Esophagus muscularis mucosa (tissue), 4 donors: ENCODE measurements at regions of chr9 and their contacts with region 1.

Region 1: DNA sequence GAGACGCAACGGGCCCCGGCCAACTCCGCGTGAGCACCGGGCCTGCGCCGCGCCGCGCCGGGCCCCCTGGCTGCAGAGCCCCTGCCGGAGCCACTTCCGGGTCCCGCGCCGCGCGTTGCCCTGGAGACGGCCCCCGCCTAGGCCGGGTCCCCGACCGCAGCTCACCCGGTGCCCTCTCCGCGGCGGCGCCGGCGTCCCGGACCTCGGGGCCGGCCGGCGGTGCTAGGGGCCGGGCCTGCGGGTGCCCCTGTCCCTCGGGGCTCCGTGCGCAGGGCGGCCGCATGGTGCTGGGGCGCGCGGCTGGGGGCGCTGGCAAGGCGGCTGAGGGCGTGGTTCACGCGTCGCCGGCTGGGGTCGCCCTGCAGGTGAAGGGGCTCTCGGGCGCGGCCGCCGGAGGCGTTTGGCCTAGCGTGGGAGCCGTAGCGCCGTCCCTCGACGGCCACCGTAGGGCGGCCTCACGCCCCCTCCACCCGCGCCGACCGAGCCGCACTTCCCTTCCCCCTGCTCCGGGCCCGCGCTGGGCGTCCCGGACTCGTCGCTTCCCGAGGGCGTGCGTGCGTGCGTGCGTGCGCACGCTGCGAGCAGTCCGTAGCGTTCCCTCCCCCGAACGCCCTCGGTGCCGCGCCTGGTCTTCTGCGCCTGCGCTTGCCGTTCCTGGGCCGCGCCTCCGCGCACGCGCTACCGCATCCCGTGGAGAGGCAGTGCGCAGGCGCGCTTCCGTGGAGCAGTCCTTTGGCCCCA is at the start of gene TMEM250:
- DNase-seq: peak; percentile 97
- H3K4me3 ChIP-seq: peak within 1 kb of the TSS; percentile 76 to 91 (median 88)
- H3K27ac ChIP-seq: peak within 1 kb of the TSS; percentile 93 to 100 (median 96)
- H3K4me1 ChIP-seq: peaks cover 31 to 57% (median 47%) of the 10 kb centered on the region in 4 donors
- H3K27me3 ChIP-seq: peaks cover 0 to 4% (median 0%) of the 10 kb centered on the region in 4 donors
- CTCF ChIP-seq: peak in 2 of 3 experiments; percentile 23 to 34
- EP300 ChIP-seq: no peak
- POLR2A ChIP-seq: no peak
- total RNA-seq, gene TMEM250: 33.6 to 77.6 (median 59.4) TPM

Region 2: DNA sequence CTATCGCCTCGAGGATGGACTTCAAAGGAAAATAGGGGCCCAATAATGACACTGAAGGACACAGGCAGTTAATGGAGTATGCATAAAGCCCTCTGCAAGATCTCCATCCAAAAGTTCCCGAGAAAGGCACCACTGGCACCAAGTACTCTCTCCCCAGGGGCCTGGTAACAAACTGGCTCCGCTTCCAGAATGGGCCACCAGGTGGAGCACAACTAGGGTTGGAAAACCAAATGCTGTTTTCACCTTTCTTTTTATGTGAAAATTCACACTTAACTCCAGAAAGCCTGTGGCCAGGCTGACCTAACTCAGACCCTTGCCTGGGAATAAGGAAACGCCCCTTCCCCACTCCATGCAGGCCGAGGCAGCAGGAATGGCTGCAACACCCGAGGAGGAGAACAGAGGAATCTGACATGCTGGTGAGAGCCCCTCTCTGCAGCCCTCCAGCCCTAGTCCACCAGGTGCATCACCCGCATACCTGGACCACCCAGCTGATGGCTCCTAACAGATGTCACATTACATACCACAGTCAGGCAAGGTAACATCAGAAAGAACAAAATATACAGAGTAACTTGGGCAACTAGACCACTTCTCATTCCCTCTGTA is 253.9 kb before region 1 on chr9:
- intact Hi-C with region 1: loop called (anchors 5 kb)
- DNase-seq: no peak
- H3K4me3 ChIP-seq: no peak overlapping the region
- H3K27ac ChIP-seq: no peak overlapping the region
- H3K4me1 ChIP-seq: peaks cover 0 to 10% (median 8%) of the 10 kb centered on the region in 4 donors
- H3K27me3 ChIP-seq: no peaks in the 10 kb centered on the region
- CTCF ChIP-seq: peak; percentile 67 to 94 (median 73)
- EP300 ChIP-seq: no peak
- POLR2A ChIP-seq: no peak

Region 3: DNA sequence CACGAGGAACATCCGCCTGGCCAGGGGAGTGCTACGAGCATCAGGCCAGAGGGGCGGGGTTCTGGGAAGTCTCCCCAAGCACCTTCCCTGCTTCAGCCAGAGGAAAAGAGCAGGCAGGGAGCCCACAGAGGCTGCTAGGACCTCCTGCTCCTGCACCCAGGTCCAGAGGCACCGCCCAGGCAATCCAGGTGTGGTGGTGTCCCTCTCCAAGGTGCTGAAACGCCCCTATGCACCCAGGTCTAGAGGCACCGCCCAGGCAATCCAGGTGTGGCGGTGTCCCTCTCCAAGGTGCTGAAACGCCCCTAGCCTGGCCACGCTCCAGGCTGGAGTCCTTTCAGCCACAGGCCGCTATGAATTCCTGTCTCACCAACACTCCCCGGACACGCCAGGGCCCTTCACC is 146.6 kb before region 1 on chr9:
- intact Hi-C with region 1: loop called (anchors 1 kb)
- DNase-seq: no peak
- H3K4me3 ChIP-seq: no peak overlapping the region
- H3K27ac ChIP-seq: no peak overlapping the region
- H3K4me1 ChIP-seq: peaks cover 20 to 28% (median 27%) of the 10 kb centered on the region in 4 donors
- H3K27me3 ChIP-seq: peaks cover 0 to 45% (median 0%) of the 10 kb centered on the region in 4 donors
- CTCF ChIP-seq: no peak
- EP300 ChIP-seq: no peak
- POLR2A ChIP-seq: no peak

Region 4: GRCh38 chr9:135992486-135993408 is 125.7 kb before region 1 on chr9:
- intact Hi-C with region 1: loop called (anchors 10 kb)
- DNase-seq: peak; percentile 97
- H3K4me3 ChIP-seq: peak overlapping the region; percentile 31 to 47 (median 34)
- H3K27ac ChIP-seq: peak overlapping the region; percentile 84 to 91 (median 86)
- H3K4me1 ChIP-seq: peaks cover 32 to 62% (median 54%) of the 10 kb centered on the region in 4 donors
- H3K27me3 ChIP-seq: peaks cover 0 to 26% (median 0%) of the 10 kb centered on the region in 4 donors
- CTCF ChIP-seq: peak in 1 of 3 experiments; percentile 5
- EP300 ChIP-seq: peak; percentile 24
- POLR2A ChIP-seq: peak; percentile 58

Region 5: DNA sequence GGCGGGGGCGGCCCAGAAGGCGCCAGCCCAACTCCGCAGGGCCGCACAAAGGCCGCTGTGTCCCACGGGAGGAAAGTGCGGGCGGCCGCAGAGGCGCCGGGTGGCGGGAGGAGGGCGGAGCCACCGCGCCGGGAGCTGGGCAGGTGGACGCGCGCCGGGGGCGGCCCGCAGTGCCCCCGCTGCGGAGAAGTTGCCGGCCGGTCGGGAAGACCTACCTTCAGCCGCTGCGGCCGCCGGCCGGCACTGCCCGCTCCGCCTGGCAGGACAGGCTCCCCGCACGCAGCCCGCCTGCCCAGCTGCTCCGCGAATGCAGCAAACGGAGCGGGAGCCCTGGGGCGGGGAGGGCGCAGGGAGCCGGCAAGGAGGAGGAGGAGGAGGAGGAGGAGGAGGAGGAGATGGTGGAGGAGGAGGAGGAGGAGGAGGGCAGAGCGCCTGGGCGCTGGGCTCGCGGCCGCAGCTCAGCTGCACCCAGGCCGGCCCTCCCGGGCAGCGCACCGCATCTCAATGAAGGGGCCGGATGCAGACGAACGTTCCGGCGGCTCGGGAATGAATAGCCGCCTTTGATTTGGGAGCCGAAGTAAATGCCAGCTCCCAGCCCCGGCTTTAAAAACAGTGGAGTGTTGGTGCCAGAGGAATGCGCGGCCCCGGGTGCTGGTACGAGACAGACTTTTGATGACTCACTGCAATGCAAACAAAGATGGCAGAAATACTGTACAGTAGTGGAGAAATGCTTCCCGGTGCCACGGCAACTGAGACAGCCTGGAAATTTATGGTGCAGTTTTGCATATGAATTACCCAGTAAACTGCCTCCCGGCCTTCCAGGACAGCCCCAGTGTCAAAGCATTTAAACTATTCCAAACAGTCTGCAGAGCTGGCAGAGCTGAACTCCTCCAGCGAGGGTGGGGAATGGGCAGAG is 66.7 kb before region 1 on chr9:
- intact Hi-C with region 1: loop called (anchors 5 kb)
- DNase-seq: peak; percentile 92
- H3K4me3 ChIP-seq: peak overlapping the region; percentile 55 to 70 (median 58)
- H3K27ac ChIP-seq: peak overlapping the region; percentile 76 to 90 (median 87)
- H3K4me1 ChIP-seq: peaks cover 76 to 100% (median 100%) of the 10 kb centered on the region in 4 donors
- H3K27me3 ChIP-seq: no peaks in the 10 kb centered on the region
- CTCF ChIP-seq: no peak
- EP300 ChIP-seq: no peak
- POLR2A ChIP-seq: no peak

Region 6: GRCh38 chr9:136089697-136090045 is 28.8 kb before region 1 on chr9:
- intact Hi-C with region 1: loop called (anchors 5 kb)
- DNase-seq: no peak
- H3K4me3 ChIP-seq: peak overlapping the region in 2 of 4 donors; percentile 36 to 81
- H3K27ac ChIP-seq: peak overlapping the region; percentile 85 to 99 (median 94)
- H3K4me1 ChIP-seq: peaks cover 88 to 98% (median 94%) of the 10 kb centered on the region in 4 donors
- H3K27me3 ChIP-seq: no peaks in the 10 kb centered on the region
- CTCF ChIP-seq: peak; percentile 41 to 65 (median 52)
- EP300 ChIP-seq: no peak
- POLR2A ChIP-seq: no peak